ENCODE measurements at regions of chr22 and their contacts with region 1.

Region 1: DNA sequence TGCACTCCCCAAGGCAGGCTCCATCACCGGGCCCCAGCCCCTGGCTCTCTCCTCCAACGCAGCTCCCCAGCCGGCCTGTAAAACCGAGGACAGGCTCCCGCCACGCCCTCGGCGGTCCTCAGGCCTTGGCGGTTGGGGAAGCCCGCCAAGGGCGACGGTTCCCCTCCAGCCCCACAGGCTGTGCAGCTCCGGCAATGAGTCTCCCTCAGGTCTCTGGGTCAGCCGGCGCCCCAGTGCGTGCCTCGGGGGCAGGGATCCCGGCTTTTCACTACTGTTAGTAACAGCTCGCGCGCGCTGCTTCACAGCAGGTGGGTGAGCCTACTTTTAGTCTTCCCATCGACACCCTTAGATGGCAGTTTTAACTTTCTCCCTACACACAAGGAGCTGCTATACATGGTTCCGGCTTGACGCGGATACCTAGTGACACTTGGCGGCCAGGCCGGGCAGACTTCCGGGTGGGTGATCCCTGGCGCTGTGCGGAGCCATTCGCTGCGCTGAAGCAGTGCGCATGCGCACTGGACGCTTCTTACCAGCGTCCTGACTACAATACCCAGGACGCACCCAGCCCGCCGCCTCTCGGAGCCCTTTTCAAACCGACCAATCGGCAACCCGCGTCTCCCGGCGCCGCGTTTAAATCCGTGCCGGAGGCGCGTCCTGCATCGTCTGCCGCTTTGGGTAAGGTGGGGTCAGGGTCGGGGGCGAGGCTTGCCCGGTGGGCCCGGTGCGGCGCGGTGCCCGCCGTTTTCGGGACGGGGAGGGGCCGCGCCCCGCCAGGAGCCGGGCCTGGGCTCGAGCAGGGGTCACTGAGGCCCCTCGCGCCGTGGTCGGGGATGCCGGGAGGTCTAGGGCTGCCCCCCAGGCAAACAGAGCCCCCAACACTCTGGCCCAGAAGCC is at the start of gene GTSE1:
- DNase-seq: peak; percentile 97 to 99
- ATAC-seq: peak; percentile 97 to 99 (median 98)
- H3K4me3 ChIP-seq: peak within 1 kb of the TSS; percentile 43 to 76 (median 63)
- H3K27ac ChIP-seq: peak within 1 kb of the TSS; percentile 89 to 97 (median 91)
- H3K4me1 ChIP-seq: peaks cover 11 to 45% (median 18%) of the 10 kb centered on the region in 9 donors
- H3K27me3 ChIP-seq: no peaks in the 10 kb centered on the region
- CTCF ChIP-seq: peak in 6 of 9 donors; percentile 26 to 62 (median 49)
- total RNA-seq, gene GTSE1: 0.17 to 4.7 (median 0.37) TPM

Region 2: GRCh38 chr22:46013460-46014416 is 282.8 kb before region 1 on chr22:
- intact Hi-C with region 1: loop called in 1 of 10 experiments (anchors 5 kb)
- DNase-seq: peak; percentile 94
- ATAC-seq: peak; percentile 91 to 96 (median 95)
- H3K4me3 ChIP-seq: peak overlapping the region; percentile 27 to 79 (median 63)
- H3K27ac ChIP-seq: peak overlapping the region; percentile 92 to 100 (median 96)
- H3K4me1 ChIP-seq: peaks cover 7 to 49% (median 33%) of the 10 kb centered on the region in 9 donors
- H3K27me3 ChIP-seq: no peaks in the 10 kb centered on the region
- CTCF ChIP-seq: peak; percentile 56 to 86 (median 76)

Region 3: GRCh38 chr22:46250035-46250782 is 46.3 kb before region 1 on chr22 and contains the start of gene CDPF1:
- intact Hi-C with region 1: loop called in 4 of 10 experiments (anchors 5 kb)
- DNase-seq: peak; percentile 93 to 94
- ATAC-seq: peak; percentile 92 to 97 (median 94)
- H3K4me3 ChIP-seq: peak within 1 kb of the TSS; percentile 48 to 93 (median 81)
- H3K27ac ChIP-seq: peak within 1 kb of the TSS; percentile 84 to 96 (median 94)
- H3K4me1 ChIP-seq: peaks cover 13 to 58% (median 43%) of the 10 kb centered on the region in 9 donors
- H3K27me3 ChIP-seq: no peaks in the 10 kb centered on the region
- CTCF ChIP-seq: no peak
- total RNA-seq, gene CDPF1: 6.3 to 10.4 (median 7.5) TPM

Region 4: DNA sequence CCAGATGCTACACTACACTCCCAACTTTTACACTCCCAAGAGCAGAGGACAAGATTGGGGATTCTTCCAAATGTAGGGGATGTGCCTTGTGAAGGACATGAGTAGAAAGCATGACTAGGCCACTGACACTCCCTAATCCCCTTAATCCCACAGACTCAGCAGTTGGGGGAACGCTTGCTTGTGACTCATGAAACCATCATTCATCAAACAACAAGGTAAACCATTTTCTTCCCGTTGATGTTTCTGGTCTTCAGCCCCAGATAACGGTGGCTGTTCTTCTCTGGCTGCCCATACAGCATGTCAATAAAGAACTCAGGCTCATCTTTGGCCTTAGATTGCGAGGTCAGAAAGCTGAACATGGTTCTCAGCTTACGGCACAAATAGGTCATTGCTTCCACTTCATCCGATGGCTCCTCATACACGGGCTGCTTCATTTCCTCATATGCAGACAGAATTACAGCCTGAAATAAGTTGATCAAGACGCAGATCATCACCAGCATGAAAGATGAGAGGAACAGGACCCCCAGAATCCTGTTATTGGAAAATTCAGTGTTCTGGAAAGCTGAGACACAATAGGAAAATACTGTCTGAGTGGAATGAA is 40.0 kb before region 1 on chr22:
- intact Hi-C with region 1: loop called in 3 of 10 experiments (anchors 5 kb)
- DNase-seq: no peak
- ATAC-seq: no peak
- H3K4me3 ChIP-seq: no peak overlapping the region
- H3K27ac ChIP-seq: no peak overlapping the region
- H3K4me1 ChIP-seq: peaks cover 0 to 22% (median 2%) of the 10 kb centered on the region in 9 donors
- H3K27me3 ChIP-seq: peaks cover 0 to 8% (median 0%) of the 10 kb centered on the region in 7 donors
- CTCF ChIP-seq: no peak